Testis (tissue), 5 donors: ENCODE measurements at regions of chr18 and their contacts with region 1.

Region 1: DNA sequence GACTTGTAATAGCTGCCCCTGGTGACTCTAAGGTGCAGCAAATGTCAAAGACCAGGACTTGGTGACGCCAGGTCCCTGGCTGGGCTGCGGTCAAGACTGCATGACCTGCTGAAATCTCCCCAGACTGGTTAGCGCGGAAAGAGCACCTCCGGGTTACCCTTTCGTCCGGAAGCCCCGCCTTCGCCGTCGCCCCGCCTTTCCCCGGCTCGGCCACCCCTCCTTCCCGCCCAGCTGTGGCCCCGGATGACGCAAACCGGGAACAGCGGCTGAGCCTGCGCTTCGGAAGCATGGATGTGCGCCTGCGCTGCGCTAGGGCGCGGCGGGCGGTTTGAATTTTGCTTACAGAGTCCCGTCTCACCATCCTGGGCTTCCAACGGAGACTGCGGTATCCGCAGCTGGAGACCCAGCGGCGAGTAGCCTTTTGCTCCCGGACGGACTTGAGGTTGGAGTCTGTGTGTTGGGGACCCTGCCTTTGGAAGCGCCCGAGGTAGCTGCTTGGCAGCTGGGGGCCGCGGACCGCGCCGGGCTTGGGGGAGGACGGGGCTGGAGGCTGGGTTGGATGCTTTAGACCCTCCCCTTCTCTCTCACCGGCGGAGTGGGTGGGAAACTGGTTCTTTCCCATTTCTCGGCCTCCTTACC is at the start of gene SKA1:
- DNase-seq: peak; percentile 92
- H3K4me3 ChIP-seq: peak within 1 kb of the TSS; percentile 59 to 67
- H3K27ac ChIP-seq: peak within 1 kb of the TSS; percentile 66 to 83
- H3K4me1 ChIP-seq: peaks cover 11% of the 10 kb centered on the region
- H3K27me3 ChIP-seq: no peaks in the 10 kb centered on the region
- CTCF ChIP-seq: no peak
- POLR2A ChIP-seq: no peak
- total RNA-seq, gene SKA1: 5.5 to 6.6 TPM

Region 2: DNA sequence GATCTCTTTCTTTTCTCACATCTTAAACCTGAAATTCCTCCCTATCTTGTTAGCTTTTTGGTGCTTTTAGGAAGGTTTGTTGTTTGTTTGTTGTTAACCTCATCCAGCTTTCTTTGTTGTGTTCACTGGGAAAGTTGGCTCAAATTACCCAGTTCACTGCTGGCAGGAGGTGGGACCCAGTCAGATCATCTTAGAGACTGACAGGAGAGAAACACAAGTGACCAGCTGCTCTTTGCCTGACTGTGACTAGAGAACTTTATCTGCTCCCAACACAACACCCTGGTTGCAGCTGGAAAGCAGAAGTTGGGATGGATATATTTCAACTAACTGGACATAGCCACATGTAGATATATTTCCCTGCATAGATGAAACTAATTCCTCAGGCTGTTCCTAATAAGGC is 195.1 kb after region 1 on chr18:
- intact Hi-C with region 1: no loop called
- DNase-seq: no peak
- H3K4me3 ChIP-seq: no peak overlapping the region
- H3K27ac ChIP-seq: no peak overlapping the region
- H3K4me1 ChIP-seq: no peaks in the 10 kb centered on the region
- H3K27me3 ChIP-seq: no peaks in the 10 kb centered on the region
- CTCF ChIP-seq: no peak
- POLR2A ChIP-seq: no peak

Region 3: GRCh38 chr18:50662177-50662576 is 287.3 kb after region 1 on chr18:
- intact Hi-C with region 1: loop called (anchors 10 kb)
- DNase-seq: no peak
- H3K4me3 ChIP-seq: no peak overlapping the region
- H3K27ac ChIP-seq: peak overlapping the region in 1 of 2 donors; percentile 15
- H3K4me1 ChIP-seq: peaks cover 7% of the 10 kb centered on the region
- H3K27me3 ChIP-seq: no peaks in the 10 kb centered on the region
- CTCF ChIP-seq: peak; percentile 59 to 76 (median 61)
- POLR2A ChIP-seq: no peak